ENCODE measurements at regions of chr4 and their contacts with region 1.

Region 1: DNA sequence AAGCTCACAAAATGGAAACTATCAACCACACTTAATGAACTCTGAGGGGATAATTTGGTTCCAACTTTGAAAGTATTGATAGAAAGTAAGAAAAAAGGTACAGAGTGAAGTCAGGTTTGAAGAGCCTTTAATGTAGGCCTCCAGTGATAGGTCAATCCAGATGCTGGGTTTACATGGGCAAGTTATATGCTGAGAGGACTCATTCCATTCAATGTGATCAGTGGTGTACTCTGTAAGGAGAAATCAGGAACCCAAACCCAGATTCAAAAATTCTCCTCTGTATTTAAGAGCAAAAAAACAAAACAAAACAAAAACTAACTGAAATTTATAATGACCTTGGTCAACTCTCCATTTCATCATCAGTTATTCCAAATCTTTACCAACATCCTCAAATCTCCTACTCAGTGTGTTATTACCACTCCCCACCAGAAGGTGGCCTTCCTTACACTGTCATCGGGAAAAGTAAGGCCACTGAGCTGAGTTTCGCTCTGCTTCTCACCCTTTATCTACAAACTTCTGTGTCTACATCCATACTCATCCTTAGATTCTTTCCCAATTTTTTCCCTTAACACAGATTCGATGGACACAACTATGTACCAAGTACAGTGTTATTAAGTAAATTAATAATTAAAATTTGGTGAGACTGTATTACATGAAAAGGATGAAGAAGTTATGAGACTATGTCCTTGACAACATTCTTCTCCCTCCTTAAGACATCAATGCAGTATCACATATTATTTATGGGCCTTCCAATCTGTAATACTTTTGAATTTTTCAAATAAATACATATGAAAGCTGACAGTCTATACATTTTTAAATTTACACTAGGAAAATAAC is 88.3 kb downstream of the ZAR1 start:
- DNase-seq: peak; percentile 51
- H3K4me3 ChIP-seq: no peak overlapping the region
- H3K27ac ChIP-seq: no peak overlapping the region
- H3K4me1 ChIP-seq: no peaks in the 10 kb centered on the region
- H3K27me3 ChIP-seq: no peaks in the 10 kb centered on the region
- CTCF ChIP-seq: peak; percentile 79 to 90

Region 2: DNA sequence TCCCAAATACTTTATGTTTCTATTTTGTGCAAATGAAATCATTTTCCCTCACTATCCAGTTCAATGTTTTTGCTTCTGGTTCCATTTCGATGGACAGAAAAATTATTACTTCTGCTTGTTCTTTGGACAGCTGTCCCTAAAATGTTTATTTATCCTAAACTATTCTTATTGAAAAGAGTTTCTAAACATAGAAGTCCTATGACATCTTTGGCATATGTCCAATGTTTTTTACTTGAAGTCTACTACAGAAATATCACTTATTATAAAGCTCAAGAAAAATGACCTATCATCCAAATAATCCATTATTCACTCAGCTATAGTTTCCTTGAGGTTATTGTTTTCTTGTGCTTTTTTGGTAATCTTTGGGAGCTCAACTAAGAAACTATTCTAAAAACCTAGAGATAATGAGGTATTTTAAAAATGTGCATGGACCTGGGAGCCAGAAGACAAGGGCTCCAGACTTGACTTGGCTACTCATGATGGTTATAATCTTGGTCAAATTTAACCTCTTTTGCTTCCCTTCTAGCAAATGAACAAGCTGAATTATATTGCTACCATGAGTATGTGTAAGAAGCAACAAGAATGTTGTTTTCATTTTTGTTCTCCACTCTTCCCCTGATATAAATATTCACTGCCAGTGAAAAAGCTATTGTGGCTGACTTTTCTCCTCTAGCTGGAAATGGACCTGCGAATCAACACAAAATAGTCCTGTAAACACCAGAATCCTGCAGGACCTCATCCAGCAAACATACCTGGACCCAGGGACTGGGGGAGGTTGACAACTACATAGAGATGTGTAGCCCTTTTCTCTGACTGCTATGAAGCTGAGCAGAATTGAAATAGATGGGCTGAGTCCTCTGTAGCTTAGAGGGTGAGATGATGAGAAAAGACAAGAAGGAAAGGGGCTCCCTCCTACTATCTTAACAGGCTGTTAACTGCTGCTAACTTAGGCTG is 64.3 kb after region 1 on chr4:
- CTCF ChIA-PET with region 1: no interaction called
- dilution Hi-C with region 1: no loop called
- in situ Hi-C with region 1: no loop called
- intact Hi-C with region 1: no loop called
- DNase-seq: no peak
- H3K4me3 ChIP-seq: no peak overlapping the region
- H3K27ac ChIP-seq: no peak overlapping the region
- H3K4me1 ChIP-seq: no peaks in the 10 kb centered on the region
- H3K27me3 ChIP-seq: no peaks in the 10 kb centered on the region
- CTCF ChIP-seq: no peak

Region 3: DNA sequence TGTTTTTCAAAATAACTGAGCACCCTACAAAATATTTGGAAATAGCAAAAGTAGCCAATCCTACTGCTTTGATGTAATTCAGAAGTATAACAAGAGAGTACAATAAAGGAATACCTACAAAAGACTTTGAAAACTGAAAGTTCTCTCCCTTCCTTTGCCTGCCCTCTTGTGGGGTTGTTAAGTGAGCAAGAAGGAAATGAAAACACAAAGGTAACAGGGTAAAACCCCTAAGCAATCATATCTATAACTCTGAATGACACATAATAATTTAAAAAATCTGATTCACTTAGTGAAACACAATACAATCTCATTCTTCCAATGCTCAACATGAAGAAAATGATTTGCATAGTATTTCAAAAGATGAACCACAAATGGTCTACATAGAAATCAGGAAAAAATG is 103.5 kb after region 1 on chr4:
- CTCF ChIA-PET with region 1: no interaction called
- dilution Hi-C with region 1: no loop called
- in situ Hi-C with region 1: no loop called
- intact Hi-C with region 1: loop called (anchors 1 kb)
- DNase-seq: peak; percentile 50
- H3K4me3 ChIP-seq: no peak overlapping the region
- H3K27ac ChIP-seq: no peak overlapping the region
- H3K4me1 ChIP-seq: no peaks in the 10 kb centered on the region
- H3K27me3 ChIP-seq: no peaks in the 10 kb centered on the region
- CTCF ChIP-seq: peak; percentile 38 to 69

Region 4: GRCh38 chr4:48727666-48728459 is 149.5 kb after region 1 on chr4:
- CTCF ChIA-PET with region 1: no interaction called
- dilution Hi-C with region 1: no loop called
- in situ Hi-C with region 1: no loop called
- intact Hi-C with region 1: no loop called
- DNase-seq: no peak
- H3K4me3 ChIP-seq: no peak overlapping the region
- H3K27ac ChIP-seq: no peak overlapping the region
- H3K4me1 ChIP-seq: peaks cover 24% of the 10 kb centered on the region
- H3K27me3 ChIP-seq: no peaks in the 10 kb centered on the region
- CTCF ChIP-seq: no peak

Region 5: GRCh38 chr4:48830706-48831531 is 252.6 kb after region 1 on chr4 and contains the start of gene OCIAD1:
- CTCF ChIA-PET with region 1: no interaction called
- dilution Hi-C with region 1: no loop called
- in situ Hi-C with region 1: loop called in 1 of 2 experiments (anchors 25 kb)
- intact Hi-C with region 1: loop called (anchors 1 kb)
- DNase-seq: peak; percentile 98
- H3K4me3 ChIP-seq: peak within 1 kb of the TSS; percentile 50 to 98 (median 98)
- H3K27ac ChIP-seq: peak within 1 kb of the TSS; percentile 94
- H3K4me1 ChIP-seq: peaks cover 9% of the 10 kb centered on the region
- H3K27me3 ChIP-seq: no peaks in the 10 kb centered on the region
- CTCF ChIP-seq: no peak
- total RNA-seq, gene OCIAD1: 85.5 to 125 TPM

Region 6: DNA sequence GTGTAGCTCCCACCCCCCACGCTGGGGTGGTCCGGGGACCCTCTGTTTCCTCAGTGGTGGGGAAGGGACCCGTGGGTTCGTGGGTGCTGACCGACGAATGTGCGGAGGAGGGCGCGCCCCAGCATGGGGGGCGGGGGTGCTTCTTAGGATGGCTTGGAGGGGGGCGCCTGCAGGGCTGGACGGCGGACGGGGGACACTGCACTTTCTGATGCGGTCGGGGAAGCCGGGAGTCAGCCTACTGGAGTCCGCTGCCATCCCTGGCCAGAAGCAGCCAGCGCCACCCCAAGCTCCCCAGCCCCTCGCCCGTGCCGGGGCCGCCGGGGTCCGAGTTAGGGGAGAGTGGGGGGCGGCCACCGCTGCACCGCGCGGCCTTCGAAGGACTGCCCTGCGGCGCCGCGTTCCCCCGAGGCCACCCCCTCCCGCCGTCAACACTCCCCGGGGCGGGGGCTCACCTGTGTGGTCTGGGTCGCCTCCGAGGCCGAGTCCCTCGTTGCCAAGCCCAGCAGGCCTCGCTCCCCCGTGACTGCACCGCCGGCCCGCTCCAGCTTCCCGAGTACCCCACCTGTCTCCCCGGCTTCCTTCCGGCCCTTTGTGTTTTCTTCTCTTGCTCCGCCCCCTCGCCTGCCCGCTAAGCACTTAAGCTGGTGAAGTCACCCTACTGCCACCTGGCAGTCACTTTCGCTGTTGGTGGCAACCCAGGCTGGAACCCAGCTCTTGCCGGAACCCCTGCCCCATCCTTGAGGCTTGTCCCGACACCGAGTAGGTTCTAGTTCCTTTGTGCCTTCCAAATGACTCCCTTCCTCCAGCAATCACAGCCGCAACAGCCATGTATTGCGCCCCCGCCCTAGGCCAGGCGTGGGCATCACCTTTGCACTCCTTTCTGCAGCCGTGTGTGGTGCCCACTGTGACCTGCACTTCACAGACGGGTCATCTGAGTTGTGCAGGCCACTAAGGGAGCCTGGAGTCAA is 328.1 kb after region 1 on chr4 and contains the start of gene OCIAD2:
- CTCF ChIA-PET with region 1: no interaction called
- dilution Hi-C with region 1: no loop called
- in situ Hi-C with region 1: no loop called
- intact Hi-C with region 1: loop called (anchors 5 kb)
- DNase-seq: peak; percentile 57
- H3K4me3 ChIP-seq: peak within 1 kb of the TSS; percentile 68 to 80 (median 74)
- H3K27ac ChIP-seq: peak within 1 kb of the TSS; percentile 54
- H3K4me1 ChIP-seq: peaks cover 39% of the 10 kb centered on the region
- H3K27me3 ChIP-seq: no peaks in the 10 kb centered on the region
- CTCF ChIP-seq: peak in 1 of 2 donors; percentile 21
- total RNA-seq, gene OCIAD2: 19.2 to 138 TPM

Region 7: DNA sequence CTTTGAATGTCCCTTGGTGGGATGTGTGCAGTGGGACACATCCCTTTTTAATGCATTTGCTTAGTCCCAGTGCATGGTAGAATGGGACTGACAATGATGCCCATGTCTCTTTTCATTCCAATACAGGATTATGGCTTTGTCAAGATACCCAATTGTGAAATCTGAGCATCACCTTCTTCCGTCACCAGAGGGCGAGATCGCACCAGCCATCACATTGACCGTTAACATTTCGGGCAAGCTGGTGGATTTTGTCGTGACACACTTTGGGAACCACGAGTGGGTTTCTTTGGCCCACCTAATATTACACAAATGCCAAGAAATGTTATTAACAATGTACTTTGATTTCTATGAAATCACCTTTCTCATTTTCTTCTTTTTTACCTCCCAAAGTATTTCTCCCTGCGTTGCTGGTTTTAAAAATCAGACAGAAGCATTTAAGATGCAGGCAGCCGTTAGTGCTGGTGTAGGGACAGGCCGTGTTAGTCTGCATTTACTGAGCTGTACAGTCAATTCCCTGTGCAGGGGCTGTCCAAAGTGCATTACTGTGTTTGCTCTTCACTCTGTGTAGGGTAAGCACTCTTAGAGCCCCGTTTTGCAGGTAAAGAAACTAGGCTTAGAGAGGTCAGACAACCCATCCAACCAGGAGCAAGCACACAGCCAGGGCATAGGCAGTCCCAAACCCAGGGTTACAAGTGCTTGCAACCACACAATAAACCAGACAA is 454.3 kb after region 1 on chr4:
- CTCF ChIA-PET with region 1: no interaction called
- dilution Hi-C with region 1: no loop called
- in situ Hi-C with region 1: no loop called
- intact Hi-C with region 1: loop called (anchors 5 kb)
- DNase-seq: peak; percentile 21
- H3K4me3 ChIP-seq: no peak overlapping the region
- H3K27ac ChIP-seq: no peak overlapping the region
- H3K4me1 ChIP-seq: no peaks in the 10 kb centered on the region
- H3K27me3 ChIP-seq: peaks cover 4% of the 10 kb centered on the region
- CTCF ChIP-seq: peak; percentile 65 to 72